CD4-positive, alpha-beta T cell (primary cell): ENCODE measurements at regions of chr14 and their contacts with region 1.

Region 1: GRCh38 chr14:96796851-96797581 is at the start of gene VRK1:
- DNase-seq: peak; percentile 89 to 97 (median 95)
- ATAC-seq: peak; percentile 97
- H3K4me3 ChIP-seq: peak within 1 kb of the TSS; percentile 65
- H3K4me3 Mint-ChIP-seq: peak within 1 kb of the TSS; percentile 89
- H3K27ac ChIP-seq: peak within 1 kb of the TSS in 1 of 2 donors; percentile 70
- H3K27ac Mint-ChIP-seq: peak within 1 kb of the TSS; percentile 92
- H3K4me1 ChIP-seq: peaks cover 9% of the 10 kb centered on the region
- H3K4me1 Mint-ChIP-seq: peaks cover 24% of the 10 kb centered on the region
- H3K27me3 ChIP-seq: no peaks in the 10 kb centered on the region
- H3K27me3 Mint-ChIP-seq: no peaks in the 10 kb centered on the region
- CTCF ChIP-seq: no peak
- total RNA-seq, gene VRK1: 36.7 to 41.0 TPM

Region 2: GRCh38 chr14:95157327-95158189 is 1639.5 kb before region 1 on chr14 and contains the start of gene DICER1:
- CTCF ChIA-PET with region 1: no interaction called
- POLR2A ChIA-PET with region 1: no interaction called
- intact Hi-C with region 1: loop called in 1 of 2 experiments (anchors 10 kb)
- DNase-seq: peak; percentile 89 to 96 (median 93)
- ATAC-seq: peak; percentile 73
- H3K4me3 ChIP-seq: peak within 1 kb of the TSS; percentile 83
- H3K4me3 Mint-ChIP-seq: peak within 1 kb of the TSS; percentile 99
- H3K27ac ChIP-seq: peak within 1 kb of the TSS; percentile 87 to 93
- H3K27ac Mint-ChIP-seq: peak within 1 kb of the TSS; percentile 100
- H3K4me1 ChIP-seq: peaks cover 28% of the 10 kb centered on the region
- H3K4me1 Mint-ChIP-seq: peaks cover 49% of the 10 kb centered on the region
- H3K27me3 ChIP-seq: no peaks in the 10 kb centered on the region
- H3K27me3 Mint-ChIP-seq: no peaks in the 10 kb centered on the region
- CTCF ChIP-seq: no peak
- total RNA-seq, gene DICER1: 53.7 to 66.0 TPM

Region 3: DNA sequence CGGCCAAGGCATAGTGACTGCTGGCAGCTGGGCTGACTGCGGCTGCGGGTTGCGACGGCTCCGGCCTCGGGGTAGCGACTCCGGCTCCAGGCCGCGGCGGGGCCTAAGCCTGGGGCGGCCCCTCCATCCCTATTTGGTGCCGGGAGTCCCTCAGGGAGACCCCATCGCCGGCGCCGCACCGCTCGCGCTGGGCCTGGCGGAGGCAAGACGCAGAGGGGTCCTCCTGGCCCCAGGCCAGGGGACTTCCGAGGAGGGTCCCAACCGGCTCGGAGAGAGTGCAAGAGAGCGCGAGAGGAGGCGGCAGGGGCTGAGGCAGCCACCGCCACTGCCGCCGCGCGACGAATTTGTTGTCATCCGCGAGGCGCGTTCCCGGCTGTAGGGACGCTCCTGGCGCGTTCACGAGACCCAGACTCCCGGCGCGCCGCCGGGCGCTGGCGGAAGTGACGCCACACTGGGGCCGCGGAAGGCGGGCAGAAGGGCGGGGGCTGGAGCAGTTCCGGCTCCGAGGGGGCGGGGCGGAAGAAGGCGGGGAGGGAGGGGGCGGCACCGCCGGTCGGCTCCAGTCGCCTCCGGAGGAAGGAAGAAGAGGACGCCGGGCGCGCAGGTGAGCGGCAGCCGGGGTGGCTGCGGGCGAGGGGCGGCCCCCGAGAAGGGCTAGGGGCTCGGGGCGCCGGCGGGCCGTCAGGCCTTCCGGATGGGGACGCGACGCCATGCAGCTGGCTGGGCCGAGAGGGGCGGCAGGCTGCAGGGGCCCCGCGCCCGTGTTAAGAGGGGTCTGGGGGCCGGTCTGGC is 433.9 kb before region 1 on chr14 and contains the starts of genes ATG2B and GSKIP:
- CTCF ChIA-PET with region 1: no interaction called
- POLR2A ChIA-PET with region 1: no interaction called
- intact Hi-C with region 1: loop called in 1 of 2 experiments (anchors 10 kb)
- DNase-seq: peak; percentile 94 to 99 (median 98)
- ATAC-seq: peak; percentile 78
- H3K4me3 ChIP-seq: peak within 1 kb of the TSS; percentile 89
- H3K4me3 Mint-ChIP-seq: peak within 1 kb of the TSS; percentile 95
- H3K27ac ChIP-seq: peak within 1 kb of the TSS; percentile 87 to 97
- H3K27ac Mint-ChIP-seq: peak within 1 kb of the TSS; percentile 89
- H3K4me1 ChIP-seq: peaks cover 28% of the 10 kb centered on the region
- H3K4me1 Mint-ChIP-seq: peaks cover 67% of the 10 kb centered on the region
- H3K27me3 ChIP-seq: no peaks in the 10 kb centered on the region
- H3K27me3 Mint-ChIP-seq: no peaks in the 10 kb centered on the region
- CTCF ChIP-seq: no peak
- total RNA-seq, gene ATG2B: 20.1 to 20.2 TPM
- total RNA-seq, gene GSKIP: 10.3 to 11.9 TPM

Region 4: GRCh38 chr14:96501742-96502617 is 295.0 kb before region 1 on chr14 and contains the start of gene PAPOLA:
- CTCF ChIA-PET with region 1: no interaction called
- POLR2A ChIA-PET with region 1: no interaction called
- intact Hi-C with region 1: loop called in 1 of 2 experiments (anchors 2 kb)
- DNase-seq: peak; percentile 90 to 99 (median 94)
- ATAC-seq: peak; percentile 87
- H3K4me3 ChIP-seq: peak within 1 kb of the TSS; percentile 80
- H3K4me3 Mint-ChIP-seq: peak within 1 kb of the TSS; percentile 97
- H3K27ac ChIP-seq: peak within 1 kb of the TSS; percentile 93 to 96
- H3K27ac Mint-ChIP-seq: peak within 1 kb of the TSS; percentile 87
- H3K4me1 ChIP-seq: peaks cover 33% of the 10 kb centered on the region
- H3K4me1 Mint-ChIP-seq: peaks cover 46% of the 10 kb centered on the region
- H3K27me3 ChIP-seq: no peaks in the 10 kb centered on the region
- H3K27me3 Mint-ChIP-seq: peaks cover 4% of the 10 kb centered on the region
- CTCF ChIP-seq: peak; percentile 17
- total RNA-seq, gene PAPOLA: 140 to 148 TPM

Region 5: DNA sequence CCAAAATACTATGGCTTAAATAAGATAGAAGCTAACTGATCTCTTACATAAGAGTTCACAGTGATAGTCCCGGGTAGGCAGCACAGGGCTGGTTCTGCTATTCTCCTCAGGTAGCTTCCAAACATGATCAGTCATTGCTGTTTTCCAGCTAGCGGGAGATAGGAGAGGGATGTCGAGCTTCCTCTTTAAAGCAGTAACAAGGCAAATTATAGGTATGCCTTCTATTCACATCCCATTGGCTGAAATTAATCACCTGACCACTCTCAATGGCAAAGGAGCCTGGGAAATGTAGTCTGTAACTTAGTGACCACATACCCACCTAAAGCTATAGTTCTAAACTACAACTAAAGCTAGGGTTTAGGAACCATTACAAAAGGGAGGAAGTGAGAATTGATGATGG is 34.4 kb before region 1 on chr14:
- CTCF ChIA-PET with region 1: no interaction called
- POLR2A ChIA-PET with region 1: interaction called, 5 read pairs
- intact Hi-C with region 1: loop called (anchors 1 to 2 kb)
- DNase-seq: peak in 4 of 14 experiments; percentile 14 to 81 (median 78)
- ATAC-seq: peak; percentile 99
- H3K4me3 ChIP-seq: no peak overlapping the region
- H3K4me3 Mint-ChIP-seq: peak overlapping the region; percentile 67
- H3K27ac ChIP-seq: no peak overlapping the region
- H3K27ac Mint-ChIP-seq: no peak overlapping the region
- H3K4me1 ChIP-seq: no peaks in the 10 kb centered on the region
- H3K4me1 Mint-ChIP-seq: peaks cover 5% of the 10 kb centered on the region
- H3K27me3 ChIP-seq: peaks cover 0 to 5% of the 10 kb centered on the region in 2 experiments
- H3K27me3 Mint-ChIP-seq: peaks cover 6% of the 10 kb centered on the region
- CTCF ChIP-seq: no peak

Region 6: GRCh38 chr14:96782436-96782835 is 14.6 kb before region 1 on chr14:
- CTCF ChIA-PET with region 1: no interaction called
- POLR2A ChIA-PET with region 1: no interaction called
- intact Hi-C with region 1: loop called in 1 of 2 experiments (anchors 1 kb)
- DNase-seq: no peak
- ATAC-seq: no peak
- H3K4me3 ChIP-seq: no peak overlapping the region
- H3K4me3 Mint-ChIP-seq: no peak overlapping the region
- H3K27ac ChIP-seq: no peak overlapping the region
- H3K27ac Mint-ChIP-seq: no peak overlapping the region
- H3K4me1 ChIP-seq: no peaks in the 10 kb centered on the region
- H3K4me1 Mint-ChIP-seq: no peaks in the 10 kb centered on the region
- H3K27me3 ChIP-seq: no peaks in the 10 kb centered on the region
- H3K27me3 Mint-ChIP-seq: peaks cover 35% of the 10 kb centered on the region
- CTCF ChIP-seq: no peak

Region 7: GRCh38 chr14:96874127-96874526 is 77.1 kb after region 1 on chr14:
- CTCF ChIA-PET with region 1: no interaction called
- POLR2A ChIA-PET with region 1: no interaction called
- intact Hi-C with region 1: no loop called
- DNase-seq: no peak
- ATAC-seq: no peak
- H3K4me3 ChIP-seq: no peak overlapping the region
- H3K4me3 Mint-ChIP-seq: no peak overlapping the region
- H3K27ac ChIP-seq: no peak overlapping the region
- H3K27ac Mint-ChIP-seq: no peak overlapping the region
- H3K4me1 ChIP-seq: no peaks in the 10 kb centered on the region
- H3K4me1 Mint-ChIP-seq: no peaks in the 10 kb centered on the region
- H3K27me3 ChIP-seq: no peaks in the 10 kb centered on the region
- H3K27me3 Mint-ChIP-seq: no peaks in the 10 kb centered on the region
- CTCF ChIP-seq: no peak

Region 8: DNA sequence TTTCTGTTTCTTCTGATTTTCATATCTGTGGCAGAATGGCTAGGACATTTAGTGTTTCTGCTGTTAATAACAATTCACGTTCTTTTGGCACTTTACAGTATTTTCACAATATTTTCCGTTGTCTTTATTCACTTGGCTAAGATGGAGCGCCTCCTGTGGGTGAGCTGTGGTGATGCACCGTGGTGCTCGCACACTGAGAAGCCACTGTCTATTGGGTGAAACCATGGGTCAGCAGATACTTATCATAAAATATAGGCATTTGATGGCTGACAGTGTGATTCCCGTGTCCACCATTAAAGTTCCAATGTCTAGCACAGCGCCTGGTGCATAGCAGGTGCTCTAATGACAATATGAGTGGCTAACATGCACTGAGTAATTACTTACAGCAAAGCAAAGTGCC is 141.9 kb after region 1 on chr14:
- CTCF ChIA-PET with region 1: no interaction called
- POLR2A ChIA-PET with region 1: no interaction called
- intact Hi-C with region 1: no loop called
- DNase-seq: no peak
- ATAC-seq: no peak
- H3K4me3 ChIP-seq: no peak overlapping the region
- H3K4me3 Mint-ChIP-seq: no peak overlapping the region
- H3K27ac ChIP-seq: no peak overlapping the region
- H3K27ac Mint-ChIP-seq: no peak overlapping the region
- H3K4me1 ChIP-seq: no peaks in the 10 kb centered on the region
- H3K4me1 Mint-ChIP-seq: no peaks in the 10 kb centered on the region
- H3K27me3 ChIP-seq: no peaks in the 10 kb centered on the region
- H3K27me3 Mint-ChIP-seq: no peaks in the 10 kb centered on the region
- CTCF ChIP-seq: no peak